ENCODE measurements at regions of chr13 and their contacts with region 1.

Region 1: DNA sequence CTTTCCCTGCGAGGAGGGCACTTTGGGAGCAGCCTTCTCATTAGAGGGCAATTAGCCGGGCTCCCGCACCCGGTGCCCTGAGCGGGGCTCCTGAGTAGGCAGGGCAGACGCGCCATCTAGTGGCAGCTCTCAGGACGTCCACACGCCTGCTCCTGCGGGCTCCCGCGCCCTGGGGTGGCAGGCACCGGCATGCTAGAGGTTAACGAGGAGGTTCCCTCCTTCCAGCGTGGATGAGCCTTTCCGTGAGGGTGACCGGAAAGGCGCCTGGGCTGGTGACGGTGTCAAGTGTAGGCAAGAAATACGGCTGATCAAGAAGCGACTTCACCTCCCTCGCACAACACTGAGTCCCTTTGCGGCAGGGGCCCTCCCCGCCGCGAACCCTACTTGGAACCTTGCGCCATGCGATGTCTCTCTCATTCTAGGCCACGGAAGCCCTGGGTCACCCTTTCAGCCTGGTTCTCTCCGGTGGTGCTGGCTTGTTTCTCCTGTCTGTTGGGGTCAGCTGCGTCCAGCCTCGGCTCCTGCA is 67.7 kb downstream of the ALOX5AP start:
- DNase-seq: peak; percentile 92 to 95 (median 94)
- ATAC-seq: peak; percentile 95 to 97 (median 97)
- H3K4me3 ChIP-seq: peak overlapping the region; percentile 48 to 68 (median 50)
- H3K27ac ChIP-seq: peak overlapping the region; percentile 61 to 80 (median 70)
- H3K4me1 ChIP-seq: peaks cover 0 to 27% (median 11%) of the 10 kb centered on the region in 4 donors
- H3K27me3 ChIP-seq: no peaks in the 10 kb centered on the region
- CTCF ChIP-seq: peak; percentile 95 to 99 (median 98)
- POLR2A ChIP-seq: peak; percentile 67

Region 2: DNA sequence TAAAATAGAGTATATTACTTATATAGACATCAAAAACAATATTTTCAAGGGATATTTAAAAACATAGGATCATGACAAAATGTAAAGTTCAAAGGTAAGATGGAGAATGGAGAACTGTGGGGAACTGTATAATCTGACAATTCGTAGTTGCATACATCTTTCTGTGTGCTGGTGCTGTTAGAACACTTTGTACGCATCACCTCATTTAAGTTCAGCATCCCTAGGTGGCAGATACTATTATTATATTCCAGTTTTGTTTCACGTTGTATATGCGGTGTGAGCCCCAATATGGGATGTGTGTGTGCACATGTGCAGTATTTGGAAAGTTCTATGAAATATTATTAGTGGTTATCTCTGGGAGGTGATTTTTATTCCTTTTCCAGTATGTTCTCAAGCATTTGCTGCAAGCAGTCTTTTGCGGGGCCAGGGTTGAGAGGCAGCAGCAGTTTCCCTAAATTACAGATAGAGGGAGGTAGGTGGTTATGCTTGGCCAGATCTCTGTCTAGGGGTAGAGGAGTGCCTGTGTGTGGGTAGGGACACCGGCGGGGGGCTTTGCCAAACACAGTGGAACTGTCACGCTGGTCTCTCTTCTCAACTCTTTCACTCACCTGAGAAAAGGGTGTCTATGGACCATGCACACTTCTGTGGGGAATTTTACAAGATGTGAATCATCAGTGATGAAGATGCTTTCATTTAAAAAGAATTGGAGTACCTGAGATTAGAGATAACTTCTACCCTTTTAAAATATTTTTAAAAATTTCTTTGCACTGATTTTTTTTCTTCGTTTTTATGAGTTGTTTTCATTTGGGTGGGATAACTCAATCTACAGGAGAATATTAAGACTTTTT is 123.3 kb before region 1 on chr13:
- intact Hi-C with region 1: loop called in 1 of 2 experiments (anchors 5 kb)
- DNase-seq: peak in 1 of 3 donors; percentile 19
- ATAC-seq: peak; percentile 48 to 66 (median 58)
- H3K4me3 ChIP-seq: no peak overlapping the region
- H3K27ac ChIP-seq: no peak overlapping the region
- H3K4me1 ChIP-seq: no peaks in the 10 kb centered on the region
- H3K27me3 ChIP-seq: no peaks in the 10 kb centered on the region
- CTCF ChIP-seq: peak; percentile 37 to 50 (median 44)
- POLR2A ChIP-seq: no peak

Region 3: GRCh38 chr13:30985637-30986205 is 182.7 kb after region 1 on chr13:
- intact Hi-C with region 1: no loop called
- DNase-seq: no peak
- ATAC-seq: no peak
- H3K4me3 ChIP-seq: no peak overlapping the region
- H3K27ac ChIP-seq: no peak overlapping the region
- H3K4me1 ChIP-seq: no peaks in the 10 kb centered on the region
- H3K27me3 ChIP-seq: no peaks in the 10 kb centered on the region
- CTCF ChIP-seq: no peak
- POLR2A ChIP-seq: no peak

Measured in right lobe of liver (tissue), 6 donors.